ENCODE measurements at regions of chr3 and their contacts with region 1.

Region 1: DNA sequence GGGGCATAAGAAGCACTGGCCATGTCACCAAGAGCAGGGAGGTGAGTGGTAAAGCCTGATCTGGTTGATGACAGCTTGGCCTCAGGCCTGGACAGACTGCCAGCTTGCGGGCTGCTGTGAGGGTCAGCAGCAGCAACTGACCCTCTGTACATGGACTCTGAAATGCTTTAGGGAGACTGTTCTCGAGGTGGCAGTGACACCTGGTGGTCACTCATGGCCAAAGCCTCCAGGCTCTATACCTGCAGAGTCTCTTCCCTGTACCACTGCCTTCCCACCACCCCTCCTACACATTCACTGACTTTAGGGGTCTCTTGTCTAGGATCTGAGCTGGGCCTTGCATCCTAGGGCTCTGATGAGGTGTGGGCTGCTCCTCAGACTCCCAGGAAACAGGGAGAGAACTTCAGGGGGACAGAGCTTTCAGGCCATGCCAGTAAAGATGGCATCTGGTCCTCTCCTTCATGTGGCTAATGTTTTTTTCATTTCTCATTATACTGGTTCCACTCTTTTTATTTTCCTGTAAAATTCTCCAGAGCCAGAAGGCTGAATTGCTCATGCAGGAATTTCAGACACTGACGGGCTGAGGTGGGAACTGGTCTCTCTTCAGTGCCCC is 17.2 kb upstream of the TIMP4 start:
- DNase-seq: peak; percentile 58 to 60
- ATAC-seq: peak; percentile 96 to 98
- H3K4me3 ChIP-seq: no peak overlapping the region
- H3K27ac ChIP-seq: peak overlapping the region; percentile 33 to 51; a peak in 3 of 6 replicates
- H3K4me1 ChIP-seq: peaks cover 16% of the 10 kb centered on the region
- CTCF ChIP-seq: peak; percentile 85
- EP300 ChIP-seq: no peak
- POLR2A ChIP-seq: no peak
- RAD21 ChIP-seq: peak; percentile 94

Region 2: DNA sequence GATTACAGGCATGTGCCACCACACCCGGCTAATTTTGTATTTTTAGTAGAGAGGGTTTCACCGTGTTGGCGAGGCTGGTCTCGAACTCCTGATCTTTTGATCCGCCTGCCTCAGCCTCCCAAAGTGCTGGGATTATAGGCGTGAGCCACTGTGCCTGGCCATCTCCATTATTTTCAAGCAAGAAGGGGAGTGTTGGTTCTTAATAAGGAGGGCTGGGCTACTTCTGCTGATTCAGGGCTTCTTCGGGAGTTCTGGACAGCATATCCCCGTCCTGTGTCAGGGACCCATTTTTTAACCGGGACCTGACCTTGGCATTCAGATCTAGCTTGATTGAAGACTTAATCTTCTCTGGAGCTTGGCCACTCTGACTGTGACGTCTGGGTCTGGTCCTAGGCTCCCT is 245.9 kb before region 1 on chr3:
- CTCF ChIA-PET with region 1: no interaction called
- POLR2A ChIA-PET with region 1: no interaction called
- DNase-seq: no peak
- ATAC-seq: no peak
- H3K4me3 ChIP-seq: no peak overlapping the region
- H3K27ac ChIP-seq: no peak overlapping the region
- H3K4me1 ChIP-seq: no peaks in the 10 kb centered on the region
- CTCF ChIP-seq: no peak
- EP300 ChIP-seq: no peak
- POLR2A ChIP-seq: no peak
- RAD21 ChIP-seq: no peak

Region 3: GRCh38 chr3:12165909-12166308 is 10.0 kb before region 1 on chr3:
- CTCF ChIA-PET with region 1: interaction called, 976 read pairs
- POLR2A ChIA-PET with region 1: no interaction called
- DNase-seq: no peak
- ATAC-seq: peak in 1 of 2 experiments; percentile 51; a peak in 2 of 6 replicates
- H3K4me3 ChIP-seq: no peak overlapping the region
- H3K27ac ChIP-seq: no peak overlapping the region
- H3K4me1 ChIP-seq: no peaks in the 10 kb centered on the region
- CTCF ChIP-seq: no peak
- EP300 ChIP-seq: no peak
- POLR2A ChIP-seq: no peak
- RAD21 ChIP-seq: peak in 1 of 2 experiments; percentile 34; a peak in 2 of 5 replicates

Region 4: DNA sequence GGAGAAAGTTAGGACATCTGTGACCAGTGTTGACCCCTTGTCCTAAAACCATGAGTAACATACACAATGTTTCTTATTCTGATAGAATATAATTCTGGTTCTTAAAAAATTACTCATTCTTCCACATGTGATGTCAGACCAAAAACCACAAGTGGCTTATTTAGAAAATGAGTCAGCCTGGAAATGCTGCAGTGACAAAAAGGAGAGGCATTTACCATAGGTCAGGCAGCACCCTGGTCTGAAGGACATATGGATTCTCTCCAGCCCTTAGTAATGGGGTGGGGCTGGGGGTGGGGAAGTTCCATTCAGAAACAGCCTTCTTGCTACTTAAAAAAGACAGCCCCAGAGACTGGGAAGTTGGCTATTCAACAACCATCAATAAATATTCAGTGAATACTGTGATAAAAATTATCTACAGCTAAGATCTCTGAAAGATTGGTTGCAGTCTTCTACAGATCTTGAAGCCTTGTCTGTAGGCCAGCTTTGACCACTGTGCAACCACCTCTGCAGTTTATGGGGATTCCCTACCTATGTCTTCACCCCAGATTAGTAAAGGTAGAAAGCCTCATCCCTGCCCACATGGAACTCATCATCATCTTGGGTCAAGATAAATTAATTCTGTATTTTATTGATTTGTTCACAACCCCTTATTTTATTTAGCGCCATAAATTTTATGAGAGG is 17.7 kb after region 1 on chr3:
- CTCF ChIA-PET with region 1: interaction called, 239 read pairs
- POLR2A ChIA-PET with region 1: interaction called, 3 read pairs
- DNase-seq: peak; percentile 77 to 90
- ATAC-seq: peak; percentile 84 to 86
- H3K4me3 ChIP-seq: peak overlapping the region; percentile 10; the same call in 1 of the 3 replicates
- H3K27ac ChIP-seq: peak overlapping the region; percentile 90 to 94
- H3K4me1 ChIP-seq: peaks cover 59% of the 10 kb centered on the region
- CTCF ChIP-seq: no peak
- EP300 ChIP-seq: peak; percentile 60 to 72; a peak in 3 of 5 replicates
- POLR2A ChIP-seq: no peak
- RAD21 ChIP-seq: peak in 1 of 2 experiments; percentile 49; a peak in 2 of 5 replicates

Region 5: DNA sequence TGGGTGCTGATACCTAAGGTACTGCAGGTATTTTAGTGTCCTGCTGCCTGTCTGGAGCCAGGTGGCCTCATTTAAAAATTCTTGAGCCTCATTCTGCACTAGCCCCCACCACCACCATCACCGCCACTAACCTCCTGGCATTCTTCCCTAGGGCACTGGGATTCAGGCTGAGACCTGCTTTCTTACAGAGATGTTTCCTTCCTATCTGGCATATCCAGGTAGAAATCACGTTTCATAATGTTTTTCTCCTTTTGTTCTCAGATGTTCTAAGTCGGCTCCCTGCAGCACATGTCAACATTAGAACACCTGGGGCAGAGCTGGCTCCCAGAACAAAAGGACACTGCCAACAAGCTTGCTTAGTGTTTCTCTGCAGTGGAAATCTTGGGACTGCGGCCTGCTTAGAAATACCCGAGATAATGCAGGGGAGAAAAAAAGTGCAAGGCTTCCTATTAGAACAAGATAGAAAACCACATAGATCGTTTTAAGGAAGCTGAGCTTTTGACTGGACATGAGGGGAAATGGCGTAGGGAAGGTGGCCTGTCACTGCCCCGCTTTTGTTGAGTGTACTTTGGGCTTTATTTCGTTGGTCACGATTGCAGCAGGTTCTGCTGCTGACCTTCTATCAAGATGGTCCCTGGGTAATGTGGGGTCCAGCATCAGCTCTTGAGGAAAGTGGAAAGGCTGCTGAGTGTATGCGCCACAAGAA is 53.4 kb after region 1 on chr3:
- CTCF ChIA-PET with region 1: no interaction called
- POLR2A ChIA-PET with region 1: no interaction called
- DNase-seq: no peak
- ATAC-seq: no peak
- H3K4me3 ChIP-seq: no peak overlapping the region
- H3K27ac ChIP-seq: no peak overlapping the region
- H3K4me1 ChIP-seq: no peaks in the 10 kb centered on the region
- CTCF ChIP-seq: no peak
- EP300 ChIP-seq: no peak
- POLR2A ChIP-seq: no peak
- RAD21 ChIP-seq: no peak

Region 6: GRCh38 chr3:12471243-12471651 is 295.3 kb after region 1 on chr3:
- CTCF ChIA-PET with region 1: interaction called, 85 read pairs
- POLR2A ChIA-PET with region 1: no interaction called
- DNase-seq: peak; percentile 69 to 82
- ATAC-seq: peak; percentile 89 to 95
- H3K4me3 ChIP-seq: no peak overlapping the region
- H3K27ac ChIP-seq: peak overlapping the region; percentile 73 to 84
- H3K4me1 ChIP-seq: peaks cover 32% of the 10 kb centered on the region
- CTCF ChIP-seq: peak; percentile 32; the same call in 1 of the 3 replicates
- EP300 ChIP-seq: 0 out of 5 replicates have a peak, but pooled peaks of 1 of the 2 experiments have one; percentile 17
- POLR2A ChIP-seq: no peak
- RAD21 ChIP-seq: peak; percentile 61 to 62

Measured in A549 (cell line).